Adrenal gland (tissue), 19 donors: ENCODE measurements at regions of chr17 and their contacts with region 1.

Region 1: GRCh38 chr17:28405632-28406472 is at the start of gene SLC46A1:
- DNase-seq: peak; percentile 45 to 76 (median 67)
- H3K4me3 ChIP-seq: peak within 1 kb of the TSS; percentile 25 to 85 (median 70)
- H3K27ac ChIP-seq: peak within 1 kb of the TSS in 4 of 5 donors; percentile 57 to 84 (median 72)
- H3K4me1 ChIP-seq: peaks cover 19 to 37% of the 10 kb centered on the region in 2 donors
- H3K27me3 ChIP-seq: no peaks in the 10 kb centered on the region
- CTCF ChIP-seq: no peak
- POLR2A ChIP-seq: peak in 1 of 2 donors; percentile 45
- total RNA-seq, gene SLC46A1: 11.9 to 79.8 (median 49.0) TPM

Region 2: GRCh38 chr17:28467456-28468025 is 61.7 kb after region 1 on chr17:
- intact Hi-C with region 1: loop called in 1 of 2 experiments (anchors 10 kb)
- DNase-seq: no peak
- H3K4me3 ChIP-seq: no peak overlapping the region
- H3K27ac ChIP-seq: no peak overlapping the region
- H3K4me1 ChIP-seq: no peaks in the 10 kb centered on the region
- H3K27me3 ChIP-seq: no peaks in the 10 kb centered on the region
- CTCF ChIP-seq: no peak
- POLR2A ChIP-seq: no peak